Dendritic cell treated with granulocyte-macrophage colony-stimulating factor and Interleukin-4, amounts not matched to agents 40 ng/mL and 50 ng/mL, for 4 days (primary cell): ENCODE measurements at regions of chr17 and their contacts with region 1.

Region 1: DNA sequence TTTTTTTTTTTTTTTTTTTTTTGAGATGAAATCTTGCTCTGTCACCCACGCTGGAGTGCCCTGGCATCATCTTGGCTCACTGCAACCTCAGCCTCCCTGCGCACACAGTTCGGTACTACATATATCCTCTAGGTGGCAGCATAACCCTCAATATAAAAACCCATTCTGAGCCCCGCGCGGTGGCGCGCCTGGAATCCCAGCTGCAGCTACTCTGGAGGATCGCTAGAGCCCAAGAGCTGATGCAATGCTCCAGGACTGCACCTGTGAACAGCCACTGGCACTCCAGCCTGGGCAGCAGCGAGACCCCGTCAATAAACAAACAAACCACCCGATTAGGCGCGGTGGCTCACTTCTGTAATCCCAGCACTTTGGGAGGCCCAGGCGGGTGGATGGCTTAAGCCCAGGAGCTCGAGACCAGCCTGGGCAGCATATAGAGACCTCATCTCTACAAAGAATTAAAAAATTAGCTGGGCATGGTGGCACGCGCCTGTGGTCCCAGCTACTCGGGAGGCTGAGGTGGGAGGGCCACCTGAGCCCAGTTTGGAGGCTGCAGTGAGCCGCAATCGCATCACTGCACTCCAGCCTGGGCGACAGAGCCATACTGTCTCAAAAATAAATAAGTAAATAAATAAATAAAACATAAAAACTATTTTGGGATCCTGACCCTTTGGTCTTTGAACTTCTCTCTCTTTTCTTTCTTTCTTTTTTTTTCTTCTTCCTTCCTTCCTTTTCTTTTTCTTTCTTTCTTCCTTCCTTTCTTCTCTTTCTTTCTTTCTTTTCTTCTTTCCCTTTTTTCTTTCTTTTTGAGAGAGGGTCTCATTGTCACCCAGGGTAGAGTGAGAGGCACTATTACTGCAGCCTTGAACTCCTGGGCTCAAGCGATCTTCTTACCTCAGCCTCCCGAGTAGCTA is 15.4 kb upstream of the AKAP10 start:
- H3K4me3 Mint-ChIP-seq: no peak overlapping the region
- H3K27ac Mint-ChIP-seq: no peak overlapping the region
- H3K4me1 Mint-ChIP-seq: peaks cover 20% of the 10 kb centered on the region
- H3K27me3 Mint-ChIP-seq: peaks cover 13% of the 10 kb centered on the region

Region 2: DNA sequence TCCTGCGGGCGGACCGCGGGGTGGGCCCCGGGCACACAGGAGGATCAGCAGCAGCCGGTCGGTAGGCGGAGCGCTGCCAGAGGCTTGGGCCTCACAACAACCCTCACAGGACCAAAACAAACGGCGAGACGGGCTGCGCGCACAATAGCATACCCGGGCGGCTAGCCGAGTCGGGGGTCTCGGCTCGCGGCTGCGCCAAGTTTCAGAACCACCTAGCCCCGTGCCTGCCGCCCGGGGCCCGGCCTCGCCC is 126.1 kb before region 1 on chr17:
- intact Hi-C with region 1: no loop called
- H3K4me3 Mint-ChIP-seq: peak overlapping the region; percentile 89
- H3K27ac Mint-ChIP-seq: peak overlapping the region; percentile 76
- H3K4me1 Mint-ChIP-seq: peaks cover 12% of the 10 kb centered on the region
- H3K27me3 Mint-ChIP-seq: no peaks in the 10 kb centered on the region

Region 3: GRCh38 chr17:20226814-20227482 is 233.9 kb after region 1 on chr17:
- intact Hi-C with region 1: loop called (anchors 5 kb)
- H3K4me3 Mint-ChIP-seq: no peak overlapping the region
- H3K27ac Mint-ChIP-seq: no peak overlapping the region
- H3K4me1 Mint-ChIP-seq: peaks cover 16% of the 10 kb centered on the region
- H3K27me3 Mint-ChIP-seq: no peaks in the 10 kb centered on the region